PC-3 (cell line): ENCODE measurements at regions of chr6 and their contacts with region 1.

Region 1: GRCh38 chr6:25556516-25556915 is 95.5 kb upstream of the SCGN start:
- DNase-seq: peak; percentile 88
- ATAC-seq: peak; percentile 72
- H3K4me3 ChIP-seq: no peak overlapping the region
- H3K27ac ChIP-seq: no peak overlapping the region
- H3K4me1 ChIP-seq: peaks cover 9% of the 10 kb centered on the region
- H3K27me3 ChIP-seq: no peaks in the 10 kb centered on the region
- CTCF ChIP-seq: peak; percentile 93

Region 2: DNA sequence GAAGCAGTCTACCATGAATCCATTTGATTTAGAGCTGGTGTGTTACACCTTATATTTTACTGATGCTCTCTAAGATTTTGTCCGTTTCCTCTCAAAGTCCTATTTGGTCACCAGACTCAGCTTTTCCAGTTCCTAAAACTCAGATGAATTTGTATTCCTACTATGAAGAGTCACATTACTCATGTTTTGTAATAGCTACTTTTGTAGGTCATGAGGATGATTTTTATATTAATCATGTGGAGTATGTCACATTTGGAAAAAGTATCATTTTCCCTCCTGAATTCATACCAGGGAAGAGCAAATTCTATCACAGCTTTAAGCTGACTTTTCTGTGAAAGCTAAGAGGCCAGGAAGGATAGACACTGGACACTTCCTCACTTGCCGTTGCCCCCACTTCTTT is 45.1 kb before region 1 on chr6:
- CTCF ChIA-PET with region 1: no interaction called
- POLR2A ChIA-PET with region 1: no interaction called
- intact Hi-C with region 1: loop called (anchors 5 kb)
- DNase-seq: peak; percentile 54
- ATAC-seq: peak; percentile 48; the same call in 1 of the 2 replicates
- H3K4me3 ChIP-seq: no peak overlapping the region
- H3K27ac ChIP-seq: peak overlapping the region; percentile 35
- H3K4me1 ChIP-seq: peaks cover 23% of the 10 kb centered on the region
- H3K27me3 ChIP-seq: no peaks in the 10 kb centered on the region
- CTCF ChIP-seq: no peak

Region 3: DNA sequence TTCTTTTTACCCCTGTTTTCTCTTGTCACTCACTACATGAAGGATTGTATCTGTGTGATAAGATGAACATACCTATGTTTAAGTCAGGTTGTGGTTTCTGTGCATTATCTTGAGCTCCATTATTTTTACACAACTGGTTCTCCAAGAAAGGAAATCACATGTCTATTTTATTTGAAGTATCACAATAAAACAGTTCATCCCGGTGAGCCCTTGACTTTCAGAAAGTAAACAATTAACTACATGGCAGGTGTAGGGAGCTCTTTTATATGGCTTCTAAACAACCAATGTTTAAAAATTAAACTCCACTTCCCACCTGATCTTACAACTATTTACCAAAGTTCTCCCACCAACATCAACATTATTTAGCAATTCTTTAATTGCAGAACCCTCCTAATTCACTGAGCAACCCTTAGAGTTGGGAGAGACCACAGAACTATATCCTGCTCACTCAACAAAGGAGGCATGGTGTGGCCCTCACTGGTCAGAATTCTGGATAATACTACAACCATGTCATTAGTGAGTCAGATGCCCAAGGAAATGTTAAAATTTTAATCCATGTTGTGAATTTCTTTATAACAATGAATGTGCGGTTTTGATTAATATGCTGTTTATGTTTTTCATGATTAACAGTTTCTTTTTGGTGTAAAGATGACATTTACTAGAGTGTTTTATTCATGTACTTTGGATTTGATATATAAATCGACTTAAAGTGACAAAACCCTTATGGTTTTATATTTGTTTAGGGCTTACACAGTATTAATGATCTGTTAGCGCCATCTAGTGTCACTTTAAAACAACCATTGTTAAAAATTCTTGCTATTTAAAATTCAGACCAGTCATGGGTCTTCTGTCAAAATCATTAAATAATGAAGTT is 45.5 kb after region 1 on chr6:
- CTCF ChIA-PET with region 1: no interaction called
- POLR2A ChIA-PET with region 1: no interaction called
- intact Hi-C with region 1: loop called (anchors 5 kb)
- DNase-seq: peak; percentile 70
- ATAC-seq: peak; percentile 81
- H3K4me3 ChIP-seq: no peak overlapping the region
- H3K27ac ChIP-seq: no peak overlapping the region
- H3K4me1 ChIP-seq: peaks cover 7% of the 10 kb centered on the region; the same call in 1 of the 2 replicates
- H3K27me3 ChIP-seq: no peaks in the 10 kb centered on the region
- CTCF ChIP-seq: peak; percentile 87

Region 4: DNA sequence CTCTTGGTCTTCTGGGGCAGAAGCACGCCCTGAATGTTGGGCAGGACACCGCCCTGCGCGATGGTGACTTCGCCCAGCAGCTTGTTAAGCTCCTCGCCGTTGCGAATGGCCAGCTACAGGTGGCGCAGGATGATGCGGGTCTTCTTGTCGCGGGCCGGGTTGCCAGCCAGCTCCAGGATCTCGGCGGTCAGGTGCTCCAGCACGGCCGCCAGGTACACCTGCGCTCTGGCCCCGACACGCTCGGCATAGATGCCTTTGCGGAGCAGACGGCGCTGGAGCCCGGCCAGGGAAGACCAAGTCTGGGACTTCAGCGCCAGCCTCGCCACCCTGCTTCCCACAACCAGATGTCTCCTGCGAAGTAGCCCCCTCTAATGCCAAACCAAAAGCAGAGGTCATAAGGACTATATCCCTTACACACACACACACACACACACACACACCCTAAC is 325.6 kb after region 1 on chr6:
- CTCF ChIA-PET with region 1: no interaction called
- POLR2A ChIA-PET with region 1: no interaction called
- intact Hi-C with region 1: no loop called
- DNase-seq: no peak
- ATAC-seq: no peak
- H3K4me3 ChIP-seq: no peak overlapping the region
- H3K27ac ChIP-seq: no peak overlapping the region
- H3K4me1 ChIP-seq: no peaks in the 10 kb centered on the region
- H3K27me3 ChIP-seq: peaks cover 51% of the 10 kb centered on the region
- CTCF ChIP-seq: no peak; the same call in 1 of the 2 replicates